Psoas muscle (tissue), 8 donors: ENCODE measurements at regions of chr16 and their contacts with region 1.

Region 1: DNA sequence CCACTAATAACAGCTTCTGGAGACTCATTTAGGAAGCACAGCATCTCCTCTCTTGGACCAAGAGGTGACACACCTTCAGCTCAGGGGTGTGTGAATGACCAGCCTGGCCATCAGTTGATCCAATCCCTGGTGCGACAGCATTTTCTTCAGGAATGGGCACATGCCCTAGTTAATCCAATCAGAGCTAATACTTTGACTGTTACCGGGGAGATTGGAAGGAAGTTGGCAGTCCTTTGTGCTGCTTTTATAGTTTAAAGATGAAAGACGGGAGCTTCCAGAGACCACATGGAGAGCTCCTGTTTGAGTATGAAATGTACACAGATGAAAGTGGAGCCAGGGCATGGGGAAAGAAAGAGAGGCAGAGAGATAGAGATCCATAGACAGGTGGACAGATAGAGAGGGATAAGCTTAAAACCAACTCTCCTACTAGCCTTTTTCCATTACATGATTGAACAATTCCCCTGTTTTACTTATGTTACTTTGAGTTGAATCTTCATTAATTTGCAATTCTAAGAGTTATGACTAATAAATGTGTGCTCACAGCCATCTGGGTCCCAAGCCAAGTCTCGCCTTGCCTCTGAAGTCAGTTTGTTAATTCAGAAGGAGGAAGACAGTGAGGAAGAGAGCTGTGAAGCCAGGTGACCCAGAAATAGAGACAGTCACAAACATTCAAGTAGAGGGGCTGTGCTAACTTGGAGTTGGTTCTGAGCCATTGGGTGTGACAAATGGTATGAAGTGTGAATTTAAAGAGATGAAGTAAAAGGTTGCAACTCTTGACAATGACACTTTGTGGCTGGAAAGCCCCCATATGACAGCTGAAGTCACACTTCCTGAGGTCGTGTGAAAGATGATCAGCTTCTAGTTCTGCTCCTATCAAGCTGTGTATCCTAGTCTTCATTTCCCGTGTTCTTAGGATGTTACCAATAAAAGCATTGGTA is 120.0 kb upstream of the GOT2 start:
- DNase-seq: no peak
- ATAC-seq: no peak
- H3K4me3 ChIP-seq: no peak overlapping the region
- H3K27ac ChIP-seq: no peak overlapping the region
- H3K4me1 ChIP-seq: no peaks in the 10 kb centered on the region
- H3K27me3 ChIP-seq: no peaks in the 10 kb centered on the region
- CTCF ChIP-seq: no peak

Region 2: DNA sequence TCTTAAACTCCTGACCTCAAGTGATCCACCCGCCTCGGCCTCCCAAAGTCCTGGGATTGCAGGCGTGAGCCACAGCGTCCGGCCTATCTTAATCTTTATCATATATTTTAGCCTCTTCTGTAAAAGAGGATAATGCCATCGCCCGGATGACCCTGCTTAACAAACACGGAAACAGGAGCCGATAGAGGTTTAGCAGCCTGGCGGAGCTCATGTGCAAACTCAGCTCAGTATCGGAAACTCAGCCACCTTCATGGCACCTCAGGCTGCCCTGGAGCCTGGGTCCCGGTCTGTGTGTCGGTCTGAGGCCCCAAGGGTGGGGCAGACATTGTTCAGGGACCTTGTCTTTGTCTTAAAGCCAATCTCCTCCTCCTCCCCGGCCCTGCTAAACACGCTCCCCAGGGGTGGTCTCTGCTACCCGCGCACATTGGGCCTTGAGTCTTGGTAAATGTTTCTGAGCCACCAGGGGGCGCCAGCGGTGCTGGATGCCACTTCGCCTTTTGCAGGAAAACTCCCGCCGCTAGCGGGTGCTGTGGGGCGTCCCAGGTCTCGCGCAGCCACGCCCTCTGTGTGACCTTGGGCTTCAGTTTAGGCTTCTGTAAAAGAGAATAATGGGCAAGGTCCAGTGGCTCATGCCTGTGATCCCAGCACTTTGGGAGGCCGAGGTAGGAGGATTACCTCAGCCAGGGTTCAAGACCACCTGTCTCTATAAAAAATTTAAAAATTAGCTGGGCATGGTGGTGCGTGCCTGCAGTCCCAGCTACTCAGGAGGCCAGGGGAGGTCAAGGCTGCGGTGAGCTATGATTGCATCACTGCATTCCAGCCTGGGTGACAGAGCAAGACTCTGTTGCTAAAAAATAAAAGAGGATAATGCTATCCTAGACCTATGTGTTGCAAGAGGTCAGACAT is 1889.6 kb before region 1 on chr16:
- intact Hi-C with region 1: loop called in 1 of 2 experiments (anchors 10 kb)
- DNase-seq: peak; percentile 87 to 90
- ATAC-seq: peak; percentile 34 to 80 (median 72)
- H3K4me3 ChIP-seq: no peak overlapping the region
- H3K27ac ChIP-seq: no peak overlapping the region
- H3K4me1 ChIP-seq: peaks cover 5% of the 10 kb centered on the region
- H3K27me3 ChIP-seq: no peaks in the 10 kb centered on the region
- CTCF ChIP-seq: peak; percentile 70

Region 3: DNA sequence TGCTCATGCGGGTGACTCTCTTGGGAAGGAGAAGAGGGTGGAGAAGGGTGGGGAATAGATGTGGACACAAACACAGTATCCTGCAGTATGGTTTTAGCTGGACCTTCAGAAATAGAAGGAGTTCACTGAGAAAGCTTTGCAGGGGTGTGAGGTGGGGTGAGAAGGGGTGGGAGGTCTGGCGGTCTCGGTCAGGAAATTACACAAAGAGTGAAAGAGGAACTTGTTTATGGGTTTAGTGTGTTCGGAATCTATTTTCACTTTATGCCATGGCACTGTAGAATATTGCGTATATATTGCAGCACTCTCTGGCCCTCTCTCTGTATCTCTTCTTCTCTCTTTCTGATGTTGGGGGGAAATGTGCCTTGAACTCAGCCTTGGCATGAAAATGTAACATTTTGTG is 28.2 kb after region 1 on chr16:
- intact Hi-C with region 1: no loop called
- DNase-seq: no peak
- ATAC-seq: no peak
- H3K4me3 ChIP-seq: no peak overlapping the region
- H3K27ac ChIP-seq: no peak overlapping the region
- H3K4me1 ChIP-seq: no peaks in the 10 kb centered on the region
- H3K27me3 ChIP-seq: no peaks in the 10 kb centered on the region
- CTCF ChIP-seq: no peak